Calu3 (cell line): ENCODE measurements at regions of chr12 and their contacts with region 1.

Region 1: GRCh38 chr12:131033486-131033885 is 79.8 kb downstream of the ADGRD1 start:
- DNase-seq: no peak
- H3K4me3 Mint-ChIP-seq: no peak overlapping the region
- H3K27ac Mint-ChIP-seq: no peak overlapping the region
- H3K4me1 Mint-ChIP-seq: no peaks in the 10 kb centered on the region
- H3K27me3 Mint-ChIP-seq: peaks cover 41% of the 10 kb centered on the region
- CTCF ChIP-seq: no peak

Region 2: DNA sequence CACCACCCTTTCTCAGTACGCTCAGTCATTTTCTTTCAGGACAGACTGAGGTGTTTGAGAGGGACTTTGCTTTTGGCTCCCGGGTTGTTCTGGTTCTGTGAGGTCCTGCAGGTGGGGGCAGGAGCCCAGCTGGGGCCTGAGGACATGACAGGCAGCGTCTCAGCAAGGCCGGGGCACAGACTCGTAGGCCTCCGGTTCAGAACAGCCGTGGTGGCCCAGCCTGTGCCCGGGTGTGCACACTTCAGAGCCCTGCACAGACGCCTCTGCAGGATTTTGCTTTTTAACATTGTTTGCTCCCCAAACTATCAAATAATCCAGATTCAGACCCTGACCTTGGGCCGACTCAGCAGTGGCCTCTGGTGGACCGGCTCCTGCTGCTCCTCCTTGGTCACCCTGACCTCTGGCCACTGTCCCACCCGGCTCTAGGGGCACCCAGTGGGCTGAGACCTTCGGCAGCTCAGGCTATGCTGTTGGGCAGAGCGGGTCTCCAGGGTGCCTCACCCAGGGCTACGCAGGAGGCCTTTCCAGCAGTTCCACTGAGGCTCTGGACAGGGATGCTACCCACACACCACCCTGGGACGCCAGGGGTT is 14.6 kb before region 1 on chr12:
- CTCF ChIA-PET with region 1: interaction called, 10 read pairs
- intact Hi-C with region 1: no loop called
- DNase-seq: no peak
- H3K4me3 Mint-ChIP-seq: no peak overlapping the region
- H3K27ac Mint-ChIP-seq: no peak overlapping the region
- H3K4me1 Mint-ChIP-seq: no peaks in the 10 kb centered on the region
- H3K27me3 Mint-ChIP-seq: peaks cover 60% of the 10 kb centered on the region
- CTCF ChIP-seq: no peak